ENCODE measurements at regions of chr6 and their contacts with region 1.

Region 1: GRCh38 chr6:129709769-129710449 is at the start of gene ARHGAP18:
- DNase-seq: peak; percentile 82
- ATAC-seq: peak; percentile 97
- H3K4me3 Mint-ChIP-seq: peak within 1 kb of the TSS; percentile 92
- H3K27ac Mint-ChIP-seq: peak within 1 kb of the TSS; percentile 80
- H3K4me1 Mint-ChIP-seq: peaks cover 37% of the 10 kb centered on the region
- H3K27me3 Mint-ChIP-seq: peaks cover 7% of the 10 kb centered on the region
- CTCF ChIP-seq: no peak
- total RNA-seq, gene ARHGAP18: 8.2 to 9.6 TPM

Region 2: GRCh38 chr6:129695373-129696027 is 14.4 kb before region 1 on chr6:
- CTCF ChIA-PET with region 1: interaction called, 10 read pairs
- POLR2A ChIA-PET with region 1: interaction called, 5 read pairs
- intact Hi-C with region 1: no loop called
- DNase-seq: peak; percentile 66
- ATAC-seq: peak; percentile 92
- H3K4me3 Mint-ChIP-seq: peak overlapping the region; percentile 44
- H3K27ac Mint-ChIP-seq: peak overlapping the region; percentile 81
- H3K4me1 Mint-ChIP-seq: peaks cover 56% of the 10 kb centered on the region
- H3K27me3 Mint-ChIP-seq: no peaks in the 10 kb centered on the region
- CTCF ChIP-seq: no peak

Region 3: DNA sequence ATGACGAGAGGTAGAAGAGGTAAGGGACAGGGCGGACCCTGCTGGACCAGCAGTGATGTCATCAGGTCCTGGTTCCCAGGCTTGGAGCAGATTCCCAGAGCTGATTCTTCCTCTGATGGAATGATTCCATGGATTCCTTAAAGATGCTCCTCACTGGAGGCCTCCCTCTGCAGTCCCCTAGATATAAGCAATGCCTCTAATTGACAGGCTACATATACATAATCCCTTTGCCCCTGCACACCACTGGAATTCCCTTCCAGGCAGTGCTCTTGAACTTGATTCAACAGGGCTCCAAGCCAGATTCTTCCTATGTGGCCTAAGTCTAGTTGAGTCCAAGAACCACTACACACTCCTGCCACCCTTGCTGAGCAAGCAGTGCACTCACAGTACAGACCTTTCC is 256.2 kb after region 1 on chr6:
- CTCF ChIA-PET with region 1: no interaction called
- POLR2A ChIA-PET with region 1: no interaction called
- intact Hi-C with region 1: no loop called
- DNase-seq: no peak
- ATAC-seq: no peak
- H3K4me3 Mint-ChIP-seq: no peak overlapping the region
- H3K27ac Mint-ChIP-seq: no peak overlapping the region
- H3K4me1 Mint-ChIP-seq: no peaks in the 10 kb centered on the region
- H3K27me3 Mint-ChIP-seq: peaks cover 3% of the 10 kb centered on the region
- CTCF ChIP-seq: no peak

Region 4: DNA sequence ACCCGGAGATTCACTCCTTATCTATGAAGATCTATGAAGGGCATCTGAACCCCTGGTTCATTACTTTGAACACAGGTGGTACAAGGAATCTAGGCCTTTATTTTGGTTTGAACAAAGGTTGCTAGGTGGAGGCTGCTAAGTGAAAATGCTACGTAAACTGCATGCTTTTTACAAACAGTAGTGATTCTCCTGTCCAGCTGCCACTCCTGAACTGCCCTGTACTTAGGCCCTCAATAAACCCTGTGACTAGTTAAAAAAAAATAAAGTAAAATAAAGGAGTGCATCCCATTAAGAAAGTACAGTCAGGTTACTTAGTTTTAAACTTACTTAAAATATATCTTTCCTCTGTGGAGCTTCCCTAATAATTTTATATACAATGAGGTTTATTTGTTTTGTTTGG is 1835.4 kb after region 1 on chr6:
- CTCF ChIA-PET with region 1: no interaction called
- POLR2A ChIA-PET with region 1: no interaction called
- intact Hi-C with region 1: no loop called
- DNase-seq: no peak
- ATAC-seq: no peak
- H3K4me3 Mint-ChIP-seq: no peak overlapping the region
- H3K27ac Mint-ChIP-seq: no peak overlapping the region
- H3K4me1 Mint-ChIP-seq: no peaks in the 10 kb centered on the region
- H3K27me3 Mint-ChIP-seq: no peaks in the 10 kb centered on the region
- CTCF ChIP-seq: no peak